Common myeloid progenitor, CD34-positive (primary cell): ENCODE measurements at regions of chr1 and their contacts with region 1.

Region 1: DNA sequence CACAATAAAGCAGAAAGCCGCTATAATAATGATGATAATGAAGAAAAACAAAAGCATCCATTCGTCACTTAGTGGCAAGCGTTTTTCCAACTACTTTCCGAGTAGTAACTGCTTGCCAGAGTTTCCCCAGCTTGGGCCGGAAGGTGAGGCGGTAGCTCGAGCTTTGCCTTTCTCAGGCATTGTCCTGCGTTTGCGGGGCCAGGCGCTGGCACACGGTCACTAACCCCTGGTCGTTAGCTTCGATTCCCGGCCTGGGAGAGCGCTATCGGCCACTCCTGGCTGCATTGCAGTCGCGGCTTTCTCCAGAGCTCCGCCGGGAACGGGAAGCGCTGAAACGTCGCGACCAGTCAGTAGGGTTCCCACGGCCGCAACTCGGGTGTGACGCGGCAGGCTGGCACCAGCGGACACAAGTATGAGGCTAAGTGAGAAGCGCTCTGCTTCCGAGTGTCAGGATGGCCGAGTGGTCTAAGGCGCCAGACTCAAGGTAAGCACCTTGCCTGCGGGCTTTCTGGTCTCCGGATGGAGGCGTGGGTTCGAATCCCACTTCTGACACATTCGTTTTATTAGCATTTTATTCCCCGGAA is 14.6 kb upstream of the ZNF692 start:
- DNase-seq: peak; percentile 94 to 98 (median 97)
- H3K4me3 ChIP-seq: peak overlapping the region; percentile 76 to 92 (median 86)
- H3K27ac ChIP-seq: peak overlapping the region; percentile 79 to 94
- H3K4me1 ChIP-seq: peaks cover 2 to 16% (median 7%) of the 10 kb centered on the region in 4 experiments
- H3K27me3 ChIP-seq: no peaks in the 10 kb centered on the region

Region 2: GRCh38 chr1:248906009-248906752 is 32.7 kb after region 1 on chr1 and contains the start of gene PGBD2:
- CTCF ChIA-PET with region 1: interaction called, 5 read pairs
- POLR2A ChIA-PET with region 1: interaction called, 10 read pairs
- DNase-seq: peak; percentile 94 to 97 (median 96)
- H3K4me3 ChIP-seq: peak within 1 kb of the TSS; percentile 77 to 93 (median 83)
- H3K27ac ChIP-seq: peak within 1 kb of the TSS; percentile 83 to 90
- H3K4me1 ChIP-seq: peaks cover 2 to 18% (median 14%) of the 10 kb centered on the region in 4 experiments
- H3K27me3 ChIP-seq: no peaks in the 10 kb centered on the region